ENCODE measurements at regions of chr4 and their contacts with region 1.

Region 1: GRCh38 chr4:76179398-76180318 is 31.5 kb upstream of the NUP54 start:
- DNase-seq: peak; percentile 92
- H3K4me3 Mint-ChIP-seq: no peak overlapping the region
- H3K27ac Mint-ChIP-seq: no peak overlapping the region
- H3K4me1 Mint-ChIP-seq: no peaks in the 10 kb centered on the region
- H3K27me3 Mint-ChIP-seq: no peaks in the 10 kb centered on the region

Region 2: DNA sequence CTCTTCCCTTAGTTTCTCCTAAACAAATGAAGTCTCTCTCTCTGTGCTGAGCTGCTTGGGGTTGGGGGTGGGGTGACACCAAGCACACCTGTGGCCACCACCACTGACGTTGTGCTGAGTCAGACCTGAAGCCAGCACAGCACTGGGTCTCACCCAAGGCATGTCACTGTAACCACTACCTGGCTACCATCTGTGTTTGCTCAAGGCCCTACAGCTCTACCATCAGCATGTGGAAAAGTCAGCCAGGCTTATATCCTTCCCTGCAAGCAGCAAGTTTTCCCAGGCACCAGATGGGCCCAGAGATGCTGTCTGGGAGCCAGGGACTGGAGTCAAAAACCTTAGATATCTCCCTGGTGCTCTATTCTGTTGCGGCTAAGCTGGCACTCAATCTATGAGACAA is 163.3 kb before region 1 on chr4:
- CTCF ChIA-PET with region 1: no interaction called
- intact Hi-C with region 1: no loop called
- DNase-seq: peak; percentile 40
- H3K4me3 Mint-ChIP-seq: no peak overlapping the region
- H3K27ac Mint-ChIP-seq: no peak overlapping the region
- H3K4me1 Mint-ChIP-seq: peaks cover 6% of the 10 kb centered on the region
- H3K27me3 Mint-ChIP-seq: peaks cover 4% of the 10 kb centered on the region

Region 3: GRCh38 chr4:76168688-76169087 is 11.0 kb before region 1 on chr4:
- CTCF ChIA-PET with region 1: interaction called, 22 read pairs
- intact Hi-C with region 1: no loop called
- DNase-seq: no peak
- H3K4me3 Mint-ChIP-seq: no peak overlapping the region
- H3K27ac Mint-ChIP-seq: no peak overlapping the region
- H3K4me1 Mint-ChIP-seq: no peaks in the 10 kb centered on the region
- H3K27me3 Mint-ChIP-seq: no peaks in the 10 kb centered on the region

Region 4: GRCh38 chr4:76251441-76252270 is 72.0 kb after region 1 on chr4 and contains the start of gene FAM47E:
- CTCF ChIA-PET with region 1: interaction called, 11 read pairs
- intact Hi-C with region 1: loop called (anchors 2 kb)
- DNase-seq: peak; percentile 37
- H3K4me3 Mint-ChIP-seq: peak within 1 kb of the TSS; percentile 65
- H3K27ac Mint-ChIP-seq: no peak within 1 kb of the TSS
- H3K4me1 Mint-ChIP-seq: peaks cover 4% of the 10 kb centered on the region
- H3K27me3 Mint-ChIP-seq: peaks cover 39% of the 10 kb centered on the region
- total RNA-seq, gene FAM47E: not detected

Region 5: GRCh38 chr4:76377911-76378310 is 198.3 kb after region 1 on chr4:
- CTCF ChIA-PET with region 1: interaction called, 158 read pairs
- intact Hi-C with region 1: loop called (anchors 1 kb)
- DNase-seq: peak; percentile 66
- H3K4me3 Mint-ChIP-seq: no peak overlapping the region
- H3K27ac Mint-ChIP-seq: no peak overlapping the region
- H3K4me1 Mint-ChIP-seq: no peaks in the 10 kb centered on the region
- H3K27me3 Mint-ChIP-seq: no peaks in the 10 kb centered on the region

Region 6: DNA sequence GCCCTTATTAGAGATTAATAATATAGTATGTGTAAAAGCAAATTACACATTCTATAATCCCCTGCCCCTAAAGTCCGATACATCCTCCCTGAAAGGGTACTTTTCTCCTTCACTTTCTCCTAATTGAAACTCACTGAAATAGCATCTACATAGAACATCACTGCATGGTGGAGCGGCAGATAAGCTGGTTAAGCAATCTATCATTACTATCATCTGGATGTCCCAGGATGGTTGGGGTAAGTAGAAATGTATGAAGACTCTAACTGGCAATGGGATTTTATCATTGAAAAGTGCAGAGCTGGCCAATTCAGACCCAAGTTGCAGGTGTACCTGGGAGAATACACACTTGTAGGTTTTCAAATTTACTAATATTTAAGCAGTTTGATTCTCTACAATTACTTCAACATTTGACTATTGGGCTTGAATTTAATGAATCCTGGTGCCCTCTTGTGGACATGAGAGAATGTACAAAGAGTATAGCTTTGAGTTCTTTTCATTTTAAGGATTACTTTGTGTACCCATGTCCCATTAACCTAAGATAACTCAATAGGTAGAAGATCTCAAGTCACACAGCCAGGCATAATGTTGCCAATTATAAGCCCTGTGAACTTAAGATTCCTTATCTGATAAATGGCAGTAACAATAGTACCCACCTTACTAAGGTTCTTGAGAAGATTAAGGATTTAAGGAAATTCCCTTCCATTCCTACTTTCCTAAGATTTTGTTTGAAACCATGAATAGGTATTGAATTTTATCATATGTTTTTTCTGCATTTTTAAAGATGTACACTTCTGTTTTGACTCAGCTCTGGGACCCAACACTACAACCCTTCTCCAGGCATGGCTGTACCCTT is 325.2 kb after region 1 on chr4:
- CTCF ChIA-PET with region 1: interaction called, 10 read pairs
- intact Hi-C with region 1: loop called (anchors 1 kb)
- DNase-seq: no peak
- H3K4me3 Mint-ChIP-seq: no peak overlapping the region
- H3K27ac Mint-ChIP-seq: no peak overlapping the region
- H3K4me1 Mint-ChIP-seq: no peaks in the 10 kb centered on the region
- H3K27me3 Mint-ChIP-seq: peaks cover 13% of the 10 kb centered on the region

Measured in activated naive CD4-positive, alpha-beta T cell treated with anti-CD3 and anti-CD28 coated beads for 36 hours (primary cell).